GM12878 (cell line): ENCODE measurements at regions of chr9 and their contacts with region 1.

Region 1: GRCh38 chr9:100322954-100323536 is 29.7 kb downstream of the TEX10 start:
- DNase-seq: no peak
- ATAC-seq: peak; percentile 69
- H3K4me3 ChIP-seq: no peak overlapping the region
- H3K27ac ChIP-seq: no peak overlapping the region
- H3K4me1 ChIP-seq: no peaks in the 10 kb centered on the region
- H3K27me3 ChIP-seq: no peaks in the 10 kb centered on the region
- CTCF ChIP-seq: peak; percentile 55 to 74 (median 65)
- EP300 ChIP-seq: no peak
- POLR2A ChIP-seq: no peak
- RAD21 ChIP-seq: peak; percentile 65

Region 2: DNA sequence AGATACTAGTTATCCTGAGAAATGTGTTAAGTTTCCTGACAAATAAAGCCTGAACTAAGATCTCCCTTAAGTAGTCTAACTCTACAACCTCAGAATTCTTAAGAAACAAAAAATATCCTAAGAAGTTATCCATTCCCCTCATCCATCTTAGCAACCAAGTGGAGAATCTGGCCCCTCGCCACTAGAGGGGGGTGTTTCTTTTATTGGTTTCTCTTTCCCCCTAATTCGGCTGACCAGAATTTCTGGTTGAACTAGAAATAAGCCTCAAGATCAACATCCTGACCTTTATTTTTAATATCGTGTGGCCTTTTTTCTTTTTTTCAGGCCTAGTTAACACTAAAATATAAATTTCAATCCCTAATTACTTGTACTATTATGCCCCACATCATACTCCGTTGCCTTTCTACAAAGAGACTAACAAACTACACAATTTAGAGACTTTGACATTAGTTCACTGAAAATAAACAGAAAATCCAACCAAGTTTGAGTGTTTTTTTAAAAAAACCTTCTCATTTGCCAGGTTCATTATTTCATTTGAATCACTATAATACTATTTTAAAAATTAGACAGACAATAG is 515.7 kb before region 1 on chr9:
- CTCF ChIA-PET with region 1: interaction called, 3 read pairs
- POLR2A ChIA-PET with region 1: no interaction called
- RAD21 ChIA-PET with region 1: no interaction called
- SMC1A ChIA-PET with region 1: interaction called, 3 read pairs
- in situ Hi-C with region 1: loop called (anchors 10 kb)
- intact Hi-C with region 1: no loop called
- DNase-seq: no peak
- ATAC-seq: peak; percentile 87
- H3K4me3 ChIP-seq: no peak overlapping the region
- H3K27ac ChIP-seq: no peak overlapping the region
- H3K4me1 ChIP-seq: peaks cover 6% of the 10 kb centered on the region
- H3K27me3 ChIP-seq: no peaks in the 10 kb centered on the region
- CTCF ChIP-seq: peak; percentile 73 to 81 (median 75)
- EP300 ChIP-seq: no peak
- POLR2A ChIP-seq: no peak
- RAD21 ChIP-seq: peak; percentile 89

Region 3: DNA sequence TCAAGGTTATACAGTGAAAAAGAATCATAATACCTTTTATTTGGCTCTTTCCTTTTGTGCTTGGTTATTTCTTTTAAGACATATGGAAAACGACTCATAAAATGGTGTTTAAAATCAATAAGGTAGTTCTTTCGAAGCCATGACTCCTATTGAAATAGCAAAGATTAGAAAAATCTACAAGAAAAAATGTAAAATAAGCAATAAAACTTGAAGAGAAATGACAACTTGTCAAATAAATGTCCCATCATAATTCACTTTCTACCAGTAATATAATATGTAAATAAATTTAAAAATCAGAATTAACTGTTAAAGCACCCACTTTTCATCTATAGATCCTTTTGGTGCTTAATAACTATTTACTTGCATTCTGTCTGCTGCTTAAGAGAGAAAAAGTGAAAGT is 17.2 kb after region 1 on chr9:
- CTCF ChIA-PET with region 1: interaction called, 35 read pairs
- POLR2A ChIA-PET with region 1: no interaction called
- RAD21 ChIA-PET with region 1: interaction called, 5 read pairs
- SMC1A ChIA-PET with region 1: interaction called, 4 read pairs
- in situ Hi-C with region 1: no loop called
- intact Hi-C with region 1: no loop called
- DNase-seq: no peak
- ATAC-seq: no peak
- H3K4me3 ChIP-seq: no peak overlapping the region
- H3K27ac ChIP-seq: no peak overlapping the region
- H3K4me1 ChIP-seq: peaks cover 3% of the 10 kb centered on the region; the same call in 1 of the 2 replicates
- H3K27me3 ChIP-seq: no peaks in the 10 kb centered on the region
- CTCF ChIP-seq: no peak
- EP300 ChIP-seq: no peak
- POLR2A ChIP-seq: no peak
- RAD21 ChIP-seq: no peak

Region 4: GRCh38 chr9:100346836-100347235 is 23.8 kb after region 1 on chr9:
- CTCF ChIA-PET with region 1: interaction called, 35 read pairs
- POLR2A ChIA-PET with region 1: no interaction called
- RAD21 ChIA-PET with region 1: interaction called, 5 read pairs
- SMC1A ChIA-PET with region 1: interaction called, 17 read pairs
- in situ Hi-C with region 1: no loop called
- intact Hi-C with region 1: no loop called
- DNase-seq: no peak
- ATAC-seq: no peak
- H3K4me3 ChIP-seq: peak overlapping the region; percentile 16; the same call in 1 of the 2 replicates
- H3K27ac ChIP-seq: no peak overlapping the region
- H3K4me1 ChIP-seq: no peaks in the 10 kb centered on the region; the same call in 1 of the 2 replicates
- H3K27me3 ChIP-seq: no peaks in the 10 kb centered on the region
- CTCF ChIP-seq: no peak
- EP300 ChIP-seq: no peak
- POLR2A ChIP-seq: no peak
- RAD21 ChIP-seq: no peak

Region 5: DNA sequence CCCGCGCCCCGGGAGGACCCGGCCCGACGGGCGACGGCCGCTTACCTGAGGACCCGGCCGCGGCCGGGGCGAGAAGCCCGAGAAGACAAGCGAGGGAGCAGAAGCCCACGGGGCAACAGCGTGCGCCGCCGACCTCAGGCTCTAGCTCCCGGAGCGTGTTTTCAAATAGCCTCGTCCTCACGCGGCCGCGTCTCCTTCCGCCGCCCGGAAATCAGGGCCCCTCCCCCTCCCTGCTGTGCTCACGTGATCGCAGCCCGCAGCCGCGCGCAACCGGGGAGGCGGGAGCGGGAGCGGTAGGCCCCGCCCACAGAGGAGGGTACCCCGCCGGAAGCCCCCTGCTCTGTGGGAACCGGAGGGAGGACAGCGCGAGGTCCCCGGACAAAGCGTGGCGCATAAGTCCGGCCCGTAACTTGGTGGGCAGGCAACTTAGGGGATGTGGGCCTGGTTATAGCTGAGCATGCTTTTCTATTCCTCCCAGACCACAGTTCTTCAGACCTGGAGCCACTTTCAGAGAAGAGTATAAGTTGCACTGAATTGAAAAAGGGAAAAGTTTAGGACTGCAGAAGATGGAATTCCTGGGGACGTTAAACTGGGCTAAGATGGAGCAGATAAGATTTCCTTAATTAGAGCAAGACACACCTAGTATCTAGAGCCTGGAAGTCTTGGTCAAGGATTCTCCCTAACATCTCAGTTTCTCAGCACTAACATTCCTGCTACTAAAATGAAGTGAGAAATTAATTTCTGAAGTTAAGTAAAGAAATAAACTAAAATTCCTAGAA is 29.9 kb after region 1 on chr9 and contains the start of gene TEX10:
- CTCF ChIA-PET with region 1: interaction called, 29 read pairs
- POLR2A ChIA-PET with region 1: no interaction called
- RAD21 ChIA-PET with region 1: interaction called, 3 read pairs
- SMC1A ChIA-PET with region 1: interaction called, 17 read pairs
- in situ Hi-C with region 1: no loop called
- intact Hi-C with region 1: no loop called
- DNase-seq: peak; percentile 57
- ATAC-seq: peak; percentile 85
- H3K4me3 ChIP-seq: peak within 1 kb of the TSS; percentile 95
- H3K27ac ChIP-seq: peak within 1 kb of the TSS; percentile 82
- H3K4me1 ChIP-seq: peaks cover 8% of the 10 kb centered on the region
- H3K27me3 ChIP-seq: no peaks in the 10 kb centered on the region
- CTCF ChIP-seq: no peak
- EP300 ChIP-seq: peak in 1 of 2 experiments; percentile 35; a peak in 1 of 4 replicates
- POLR2A ChIP-seq: peak; percentile 96
- RAD21 ChIP-seq: no peak
- polyA plus RNA-seq, gene TEX10: 17.4 to 25.8 TPM

Region 6: DNA sequence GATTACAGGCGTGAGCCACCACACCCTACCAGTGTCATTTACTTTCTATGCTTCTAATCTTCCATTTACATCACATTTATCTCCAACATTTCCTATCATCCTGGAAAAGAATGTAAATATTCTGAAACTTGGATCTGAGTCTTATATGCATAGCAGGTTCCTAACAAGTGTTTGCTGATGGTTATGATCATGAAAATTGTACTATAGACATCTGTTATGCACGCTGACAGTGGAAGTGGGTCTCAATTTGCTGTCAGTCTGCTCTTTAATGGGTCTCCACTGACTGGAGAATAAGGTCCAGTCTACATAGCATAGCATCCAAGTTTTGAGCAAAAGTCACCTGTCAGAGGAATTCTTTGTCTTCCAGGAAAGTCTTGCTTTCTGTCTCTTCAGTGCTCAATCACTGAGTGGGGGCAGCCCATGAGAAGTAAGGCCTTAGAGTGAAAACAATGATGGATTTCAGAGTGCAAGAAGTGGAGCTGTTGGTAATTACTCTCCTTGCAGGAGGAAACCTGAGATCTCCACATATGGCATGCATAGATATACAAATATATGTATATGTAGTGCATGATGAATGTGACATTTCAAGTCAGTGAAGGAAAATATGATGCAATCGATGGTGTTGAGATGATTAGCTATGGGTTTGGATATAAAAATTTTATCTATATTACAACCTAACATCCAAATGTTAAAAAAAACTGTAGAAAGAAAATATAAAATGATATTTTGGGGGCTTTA is 74.7 kb after region 1 on chr9:
- CTCF ChIA-PET with region 1: no interaction called
- POLR2A ChIA-PET with region 1: no interaction called
- RAD21 ChIA-PET with region 1: no interaction called
- SMC1A ChIA-PET with region 1: no interaction called
- in situ Hi-C with region 1: no loop called
- intact Hi-C with region 1: no loop called
- DNase-seq: no peak
- ATAC-seq: no peak
- H3K4me3 ChIP-seq: no peak overlapping the region
- H3K27ac ChIP-seq: no peak overlapping the region
- H3K4me1 ChIP-seq: no peaks in the 10 kb centered on the region
- H3K27me3 ChIP-seq: peaks cover 0 to under 1% of the 10 kb centered on the region in 2 experiments; a peak in 1 of 4 replicates
- CTCF ChIP-seq: no peak
- EP300 ChIP-seq: no peak
- POLR2A ChIP-seq: no peak
- RAD21 ChIP-seq: no peak

Region 7: GRCh38 chr9:100411472-100412283 is 88.6 kb after region 1 on chr9:
- CTCF ChIA-PET with region 1: no interaction called
- POLR2A ChIA-PET with region 1: no interaction called
- RAD21 ChIA-PET with region 1: no interaction called
- SMC1A ChIA-PET with region 1: no interaction called
- in situ Hi-C with region 1: no loop called
- intact Hi-C with region 1: no loop called
- DNase-seq: peak; percentile 66
- ATAC-seq: peak; percentile 100
- H3K4me3 ChIP-seq: peak overlapping the region; percentile 50
- H3K27ac ChIP-seq: no peak overlapping the region
- H3K4me1 ChIP-seq: no peaks in the 10 kb centered on the region
- H3K27me3 ChIP-seq: no peaks in the 10 kb centered on the region
- CTCF ChIP-seq: no peak
- EP300 ChIP-seq: no peak
- POLR2A ChIP-seq: peak; percentile 84
- RAD21 ChIP-seq: no peak